Psoas muscle (tissue), 8 donors: ENCODE measurements at regions of chr3 and their contacts with region 1.

Region 1: GRCh38 chr3:32018757-32019564 is 37.4 kb downstream of the ZNF860 start:
- DNase-seq: no peak
- ATAC-seq: peak; percentile 79 to 95 (median 86)
- H3K4me3 ChIP-seq: no peak overlapping the region
- H3K27ac ChIP-seq: no peak overlapping the region
- H3K4me1 ChIP-seq: no peaks in the 10 kb centered on the region
- H3K27me3 ChIP-seq: no peaks in the 10 kb centered on the region
- CTCF ChIP-seq: peak; percentile 82

Region 2: DNA sequence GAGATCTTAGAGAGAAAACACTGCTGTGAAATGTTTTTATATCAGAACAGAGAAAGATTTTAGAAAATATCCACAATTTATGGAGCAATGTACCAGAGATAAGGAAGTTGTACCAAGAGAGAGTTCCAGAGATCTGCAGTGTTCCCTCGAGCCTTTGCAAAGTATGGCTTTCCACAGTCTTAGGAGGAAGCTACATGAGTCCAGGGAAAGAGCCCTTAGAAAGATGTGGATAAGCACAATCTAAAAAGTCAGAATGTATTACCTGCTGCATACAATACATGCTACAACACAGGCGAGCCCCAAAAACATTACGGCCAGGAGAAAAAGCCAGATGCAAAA is 18.9 kb after region 1 on chr3:
- intact Hi-C with region 1: loop called in 1 of 2 experiments (anchors 2 kb)
- DNase-seq: no peak
- ATAC-seq: peak in 1 of 4 donors; percentile 26
- H3K4me3 ChIP-seq: no peak overlapping the region
- H3K27ac ChIP-seq: peak overlapping the region; percentile 82
- H3K4me1 ChIP-seq: peaks cover 14% of the 10 kb centered on the region
- H3K27me3 ChIP-seq: no peaks in the 10 kb centered on the region
- CTCF ChIP-seq: no peak

Region 3: GRCh38 chr3:32143849-32144757 is 125.1 kb after region 1 on chr3:
- intact Hi-C with region 1: loop called (anchors 1 to 2 kb)
- DNase-seq: no peak
- ATAC-seq: peak; percentile 77 to 90 (median 82)
- H3K4me3 ChIP-seq: no peak overlapping the region
- H3K27ac ChIP-seq: no peak overlapping the region
- H3K4me1 ChIP-seq: peaks cover 11% of the 10 kb centered on the region
- H3K27me3 ChIP-seq: no peaks in the 10 kb centered on the region
- CTCF ChIP-seq: peak; percentile 90